MCF 10A (cell line): ENCODE measurements at regions of chr9 and their contacts with region 1.

Region 1: DNA sequence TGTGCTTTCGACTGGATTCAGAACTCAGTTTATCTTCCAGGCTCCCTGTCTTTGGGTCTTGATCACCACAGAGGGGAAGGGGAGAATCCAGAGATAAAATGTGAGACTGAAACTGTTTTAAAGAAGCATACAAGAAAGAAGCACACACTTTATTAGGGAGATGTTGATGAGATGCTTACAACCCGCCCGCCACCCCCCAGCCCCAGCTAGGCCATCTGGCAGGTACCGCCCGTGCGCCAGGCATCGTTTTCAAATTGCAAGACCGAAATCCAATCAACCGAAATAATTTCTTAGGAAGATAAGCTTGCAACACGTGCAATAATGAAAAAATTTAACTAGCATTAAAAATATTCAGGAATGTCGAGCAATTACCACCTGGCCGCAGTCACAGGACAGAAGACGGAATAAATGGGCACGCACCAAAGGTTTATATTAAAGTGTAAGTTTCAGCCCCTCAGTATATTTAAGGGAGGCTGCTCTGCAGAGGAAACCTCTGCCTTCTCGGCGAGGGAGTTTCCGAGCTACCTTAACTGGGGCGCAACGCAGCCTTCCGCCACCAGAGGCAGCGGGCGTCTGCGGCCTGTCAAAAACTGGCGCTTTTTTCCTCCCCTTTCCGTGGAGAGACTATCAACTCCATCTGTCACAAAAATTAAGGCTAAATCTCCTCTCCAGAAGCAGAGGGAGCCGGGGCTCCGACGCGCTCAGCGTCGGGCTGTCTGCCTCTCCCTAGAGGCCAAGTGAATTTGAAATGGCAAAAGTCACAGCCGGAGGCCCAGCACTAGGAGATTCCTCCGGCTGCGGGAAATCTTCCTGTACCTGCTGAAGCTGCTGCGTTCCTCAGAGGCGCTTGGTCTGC is 996 bp upstream of the GAS1 start:
- DNase-seq: peak; percentile 85
- H3K4me3 Mint-ChIP-seq: peak overlapping the region; percentile 98
- H3K27ac Mint-ChIP-seq: peak overlapping the region; percentile 91
- H3K4me1 Mint-ChIP-seq: peaks cover 6% of the 10 kb centered on the region
- H3K27me3 Mint-ChIP-seq: no peaks in the 10 kb centered on the region
- CTCF ChIP-seq: peak; percentile 77

Region 2: GRCh38 chr9:86413966-86414880 is 534.1 kb before region 1 on chr9:
- CTCF ChIA-PET with region 1: no interaction called
- POLR2A ChIA-PET with region 1: interaction called, 6 read pairs
- intact Hi-C with region 1: loop called (anchors 1 kb)
- DNase-seq: peak; percentile 45
- H3K4me3 Mint-ChIP-seq: no peak overlapping the region
- H3K27ac Mint-ChIP-seq: no peak overlapping the region
- H3K4me1 Mint-ChIP-seq: no peaks in the 10 kb centered on the region
- H3K27me3 Mint-ChIP-seq: no peaks in the 10 kb centered on the region
- CTCF ChIP-seq: peak; percentile 44

Region 3: GRCh38 chr9:86614871-86615849 is 333.1 kb before region 1 on chr9:
- CTCF ChIA-PET with region 1: interaction called, 8 read pairs
- POLR2A ChIA-PET with region 1: interaction called, 3 read pairs
- intact Hi-C with region 1: loop called (anchors 2 kb)
- DNase-seq: peak; percentile 55
- H3K4me3 Mint-ChIP-seq: no peak overlapping the region
- H3K27ac Mint-ChIP-seq: no peak overlapping the region
- H3K4me1 Mint-ChIP-seq: no peaks in the 10 kb centered on the region
- H3K27me3 Mint-ChIP-seq: no peaks in the 10 kb centered on the region
- CTCF ChIP-seq: peak; percentile 51

Region 4: DNA sequence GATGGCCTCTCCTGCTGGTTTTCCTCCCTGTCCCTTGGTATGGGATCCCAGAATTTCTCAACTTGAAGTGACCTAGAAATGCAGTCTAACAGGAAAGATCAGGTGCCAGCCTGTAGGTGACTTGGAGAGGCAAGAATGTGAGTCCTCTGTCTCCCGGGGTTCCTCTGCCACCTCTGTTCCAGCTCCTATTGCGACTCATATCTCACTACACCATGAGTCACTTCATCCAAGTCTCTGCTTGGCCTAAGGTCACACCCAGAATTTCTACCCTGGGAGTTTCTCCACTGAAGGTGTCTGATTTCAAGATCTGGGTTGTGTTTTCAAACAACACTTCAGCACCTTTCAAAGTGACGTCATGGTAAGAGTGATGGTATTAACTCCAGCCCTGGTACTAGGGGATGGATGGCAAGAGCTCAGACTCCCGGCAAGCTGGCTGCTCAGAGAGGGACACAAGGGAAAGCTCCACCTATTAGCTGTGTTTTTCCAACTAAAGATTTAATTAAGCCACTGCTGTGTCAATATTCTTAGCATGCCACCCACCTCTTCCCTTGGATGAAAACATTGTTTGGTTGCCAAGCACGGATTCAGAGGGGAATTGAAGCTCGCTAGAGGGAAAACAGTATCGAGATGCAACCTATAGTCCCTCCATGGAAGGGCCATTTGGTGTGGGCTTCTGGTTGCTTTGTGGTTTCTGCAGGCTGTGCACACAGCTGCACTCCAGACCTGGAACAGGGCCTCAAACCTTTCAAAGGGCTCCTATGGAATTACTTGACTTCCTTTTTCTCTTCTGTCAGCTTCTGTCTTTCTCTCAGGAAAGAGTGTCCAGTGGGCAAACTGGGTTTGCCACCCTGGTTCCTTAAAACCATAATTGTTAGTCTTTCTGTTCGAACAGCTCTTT is 206.7 kb before region 1 on chr9:
- CTCF ChIA-PET with region 1: no interaction called
- POLR2A ChIA-PET with region 1: no interaction called
- intact Hi-C with region 1: no loop called
- DNase-seq: peak; percentile 92
- H3K4me3 Mint-ChIP-seq: no peak overlapping the region
- H3K27ac Mint-ChIP-seq: peak overlapping the region; percentile 13
- H3K4me1 Mint-ChIP-seq: peaks cover 19% of the 10 kb centered on the region
- H3K27me3 Mint-ChIP-seq: no peaks in the 10 kb centered on the region
- CTCF ChIP-seq: no peak

Region 5: DNA sequence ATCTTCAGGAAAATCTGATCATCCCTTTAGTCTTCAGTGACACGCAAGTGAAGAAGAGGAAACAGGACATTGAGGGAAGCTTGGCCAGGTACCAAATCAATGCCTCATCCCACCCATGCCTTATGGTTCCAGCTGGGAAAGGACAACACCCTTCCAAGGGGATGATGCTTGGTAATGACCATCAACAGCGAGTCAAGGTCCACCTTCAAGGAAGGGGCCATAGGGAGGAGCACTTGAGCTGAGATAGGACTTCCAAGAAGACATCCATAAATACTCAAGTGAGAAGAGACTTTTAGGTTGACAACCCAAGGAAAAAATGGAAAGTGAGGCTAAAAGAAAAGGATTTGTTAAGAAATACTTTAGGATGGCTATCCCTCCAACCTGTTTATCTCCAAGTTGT is 26.1 kb after region 1 on chr9:
- CTCF ChIA-PET with region 1: interaction called, 10 read pairs
- POLR2A ChIA-PET with region 1: interaction called, 174 read pairs
- intact Hi-C with region 1: no loop called
- DNase-seq: no peak
- H3K4me3 Mint-ChIP-seq: no peak overlapping the region
- H3K27ac Mint-ChIP-seq: no peak overlapping the region
- H3K4me1 Mint-ChIP-seq: peaks cover 27% of the 10 kb centered on the region
- H3K27me3 Mint-ChIP-seq: no peaks in the 10 kb centered on the region
- CTCF ChIP-seq: no peak

Region 6: GRCh38 chr9:87063871-87064270 is 115.6 kb after region 1 on chr9:
- CTCF ChIA-PET with region 1: no interaction called
- POLR2A ChIA-PET with region 1: interaction called, 6 read pairs
- intact Hi-C with region 1: loop called (anchors 10 kb)
- DNase-seq: peak; percentile 40
- H3K4me3 Mint-ChIP-seq: peak overlapping the region; percentile 4
- H3K27ac Mint-ChIP-seq: peak overlapping the region; percentile 65
- H3K4me1 Mint-ChIP-seq: peaks cover 52% of the 10 kb centered on the region
- H3K27me3 Mint-ChIP-seq: no peaks in the 10 kb centered on the region
- CTCF ChIP-seq: no peak

Region 7: DNA sequence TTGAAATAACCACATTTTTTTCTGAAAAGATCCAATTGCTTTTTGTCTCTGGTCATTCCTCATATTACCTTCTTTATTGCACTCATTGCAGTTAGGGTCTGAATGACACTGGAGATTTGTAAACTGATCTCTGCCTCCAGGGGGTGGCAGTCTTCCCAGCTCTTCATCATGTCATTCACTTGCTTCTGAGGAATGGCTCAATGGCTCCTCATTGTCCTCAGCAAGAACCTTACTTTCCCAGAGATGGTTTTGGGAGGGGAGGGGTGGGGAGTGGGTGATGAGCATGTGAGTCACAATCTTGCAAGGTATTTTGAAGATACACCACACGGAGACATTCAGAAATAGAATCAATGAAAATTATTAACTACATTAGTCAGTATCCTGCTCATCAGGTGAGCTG is 158.8 kb after region 1 on chr9:
- CTCF ChIA-PET with region 1: interaction called, 3 read pairs
- POLR2A ChIA-PET with region 1: interaction called, 4 read pairs
- intact Hi-C with region 1: loop called (anchors 5 kb)
- DNase-seq: peak; percentile 62
- H3K4me3 Mint-ChIP-seq: no peak overlapping the region
- H3K27ac Mint-ChIP-seq: peak overlapping the region; percentile 48
- H3K4me1 Mint-ChIP-seq: peaks cover 30% of the 10 kb centered on the region
- H3K27me3 Mint-ChIP-seq: no peaks in the 10 kb centered on the region
- CTCF ChIP-seq: no peak